Aorta (tissue), 5 donors: ENCODE measurements at regions of chr10 and their contacts with region 1.

Region 1: GRCh38 chr10:110834629-110835301 is 37.0 kb upstream of the PDCD4 start:
- DNase-seq: peak in 1 of 2 donors; percentile 59
- ATAC-seq: peak; percentile 75
- H3K4me3 ChIP-seq: no peak overlapping the region
- H3K27ac ChIP-seq: peak overlapping the region; percentile 43 to 94
- H3K4me1 ChIP-seq: peaks cover 0 to 3% of the 10 kb centered on the region in 2 donors
- H3K27me3 ChIP-seq: no peaks in the 10 kb centered on the region

Region 2: DNA sequence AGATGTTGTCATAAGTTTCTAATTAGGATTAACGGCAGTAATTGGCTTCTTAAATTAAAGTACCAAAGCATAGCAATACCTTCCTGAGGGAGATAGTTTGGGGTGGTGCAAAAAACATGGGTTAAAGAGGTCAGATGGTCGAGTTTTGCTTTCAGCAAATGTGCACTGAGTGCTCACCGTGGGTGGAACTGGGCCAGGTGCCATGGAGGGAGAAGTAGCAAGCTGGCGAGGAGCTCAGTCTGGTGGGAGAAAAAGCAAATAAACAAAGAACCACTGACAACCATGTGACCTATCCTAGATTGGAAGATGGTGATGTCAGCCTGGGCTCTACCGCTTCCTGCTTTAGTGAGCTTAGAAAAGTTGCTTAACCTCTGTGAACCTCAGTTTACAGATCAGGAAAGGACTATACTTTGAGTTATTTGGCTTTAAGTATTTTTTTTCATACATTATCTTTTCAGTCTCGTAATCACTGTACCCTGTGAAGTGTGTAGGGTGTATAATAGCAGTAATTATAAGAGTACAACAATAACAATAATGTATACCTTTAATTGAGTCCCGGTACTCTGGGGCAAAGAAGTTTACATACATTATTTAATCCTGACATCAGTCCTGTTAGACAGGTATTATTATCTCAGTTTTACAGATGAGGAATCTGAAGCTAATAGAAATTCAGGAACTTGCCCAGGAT is 32.1 kb before region 1 on chr10:
- intact Hi-C with region 1: no loop called
- DNase-seq: peak; percentile 87 to 90
- ATAC-seq: peak; percentile 77
- H3K4me3 ChIP-seq: no peak overlapping the region
- H3K27ac ChIP-seq: peak overlapping the region; percentile 24 to 32
- H3K4me1 ChIP-seq: peaks cover 0 to 3% of the 10 kb centered on the region in 2 donors
- H3K27me3 ChIP-seq: no peaks in the 10 kb centered on the region

Region 3: GRCh38 chr10:110864662-110865140 is 29.9 kb after region 1 on chr10:
- intact Hi-C with region 1: loop called in 1 of 2 experiments (anchors 5 kb)
- DNase-seq: no peak
- ATAC-seq: no peak
- H3K4me3 ChIP-seq: no peak overlapping the region
- H3K27ac ChIP-seq: peak overlapping the region in 1 of 2 donors; percentile 78
- H3K4me1 ChIP-seq: peaks cover 4 to 17% of the 10 kb centered on the region in 2 donors
- H3K27me3 ChIP-seq: no peaks in the 10 kb centered on the region